ENCODE measurements at regions of chr6 and their contacts with region 1.

Region 1: DNA sequence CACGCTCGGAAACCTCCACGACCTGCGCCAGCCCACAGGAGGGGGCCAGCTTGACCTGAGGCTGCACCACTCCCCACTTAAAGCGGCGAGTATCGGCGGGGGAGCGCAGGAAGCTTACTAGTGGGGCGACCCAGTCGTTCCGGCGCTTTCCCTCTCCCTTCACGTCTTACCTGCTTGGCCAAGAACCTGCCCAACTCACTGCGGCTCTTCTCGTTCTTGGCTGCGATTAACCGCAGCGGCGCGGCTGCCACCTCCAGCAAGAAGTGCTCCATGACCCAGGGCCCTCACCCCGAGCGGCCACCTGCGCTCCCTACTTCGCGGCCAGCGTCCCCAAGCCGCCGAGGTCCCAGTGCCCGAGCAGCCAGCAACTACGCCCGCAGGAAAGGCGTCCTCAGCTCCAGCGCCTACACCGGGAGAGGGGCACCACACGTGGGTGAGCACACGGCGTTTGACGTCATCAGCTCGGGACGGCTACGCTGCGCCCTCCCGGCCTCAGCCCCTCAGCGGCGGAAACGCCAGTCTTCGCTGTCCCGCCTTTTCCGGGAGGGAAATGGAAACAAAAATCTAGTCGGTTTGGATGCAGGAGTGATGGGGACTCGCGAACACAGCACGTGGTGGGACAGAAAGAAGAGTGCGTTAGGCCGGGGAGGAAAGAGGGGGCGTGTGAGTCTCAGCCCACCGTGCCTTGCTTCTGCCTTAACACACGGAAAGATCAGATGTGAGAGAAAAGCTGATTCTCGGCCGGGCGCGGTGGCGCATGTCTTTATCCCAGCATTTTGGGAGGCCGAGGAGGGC is at the start of gene MDN1:
- DNase-seq: peak; percentile 87 to 88
- ATAC-seq: peak; percentile 97 to 99
- H3K4me3 ChIP-seq: peak within 1 kb of the TSS; percentile 72 to 99 (median 94)
- H3K27ac ChIP-seq: peak within 1 kb of the TSS; percentile 88 to 99 (median 94)
- H3K4me1 ChIP-seq: peaks cover 11 to 23% of the 10 kb centered on the region in 2 donors
- H3K27me3 ChIP-seq: no peaks in the 10 kb centered on the region
- CTCF ChIP-seq: no peak
- POLR2A ChIP-seq: peak; percentile 80
- total RNA-seq, gene MDN1: 13.5 to 22.0 (median 17.0) TPM

Region 2: DNA sequence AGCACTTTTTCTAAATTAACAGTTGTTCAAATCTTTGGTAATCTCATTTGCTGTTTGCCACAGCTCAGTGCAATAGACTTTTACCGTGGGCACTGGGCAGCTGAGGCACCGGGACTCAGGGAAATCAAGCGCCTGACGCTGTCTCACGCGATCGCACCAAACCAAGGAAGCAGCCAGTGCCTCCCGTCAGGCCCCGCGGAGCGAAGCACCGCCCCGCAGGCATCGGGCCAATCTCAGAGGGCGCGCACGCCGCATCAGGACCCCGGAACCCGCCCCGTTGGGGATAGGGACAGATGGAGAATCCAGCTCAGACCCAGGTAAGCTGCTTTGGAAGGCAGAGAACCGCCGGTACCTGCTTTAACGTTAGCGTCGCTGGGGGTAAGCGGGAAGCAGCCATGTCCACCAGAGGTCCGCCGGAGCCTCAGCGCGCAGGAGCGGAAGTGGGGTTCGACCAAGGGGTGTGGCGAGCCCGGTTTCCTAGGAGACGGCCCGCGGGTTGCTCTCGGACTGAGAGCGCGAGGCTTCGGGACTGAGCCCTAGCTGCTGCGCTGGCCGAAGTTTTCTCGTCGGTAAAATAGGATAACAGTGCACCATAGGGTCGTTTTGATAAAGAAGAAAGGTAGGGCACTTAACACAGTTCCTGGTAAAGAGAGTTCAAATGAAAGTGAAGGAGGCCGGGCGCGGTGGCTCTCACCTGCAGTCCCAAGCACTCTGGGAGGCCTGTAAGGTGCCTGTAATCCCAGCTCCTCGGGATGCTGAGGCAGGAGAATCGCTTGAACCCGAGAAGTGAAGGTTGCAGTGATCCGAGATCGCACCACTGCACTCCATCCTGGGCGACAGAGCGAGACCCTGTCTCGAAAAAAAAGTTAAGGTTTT is 181.0 kb before region 1 on chr6 and contains the start of gene LYRM2:
- in situ Hi-C with region 1: no loop called
- intact Hi-C with region 1: loop called (anchors 2 kb)
- DNase-seq: peak; percentile 93 to 94
- ATAC-seq: peak; percentile 97 to 98
- H3K4me3 ChIP-seq: peak within 1 kb of the TSS; percentile 76 to 88 (median 85)
- H3K27ac ChIP-seq: peak within 1 kb of the TSS; percentile 90 to 98 (median 95)
- H3K4me1 ChIP-seq: peaks cover 14% of the 10 kb centered on the region in 2 donors
- H3K27me3 ChIP-seq: no peaks in the 10 kb centered on the region
- CTCF ChIP-seq: peak in 4 of 5 experiments; percentile 5 to 27 (median 19)
- POLR2A ChIP-seq: peak; percentile 90 to 91
- total RNA-seq, gene LYRM2: 15.8 to 40.2 (median 23.3) TPM

Region 3: DNA sequence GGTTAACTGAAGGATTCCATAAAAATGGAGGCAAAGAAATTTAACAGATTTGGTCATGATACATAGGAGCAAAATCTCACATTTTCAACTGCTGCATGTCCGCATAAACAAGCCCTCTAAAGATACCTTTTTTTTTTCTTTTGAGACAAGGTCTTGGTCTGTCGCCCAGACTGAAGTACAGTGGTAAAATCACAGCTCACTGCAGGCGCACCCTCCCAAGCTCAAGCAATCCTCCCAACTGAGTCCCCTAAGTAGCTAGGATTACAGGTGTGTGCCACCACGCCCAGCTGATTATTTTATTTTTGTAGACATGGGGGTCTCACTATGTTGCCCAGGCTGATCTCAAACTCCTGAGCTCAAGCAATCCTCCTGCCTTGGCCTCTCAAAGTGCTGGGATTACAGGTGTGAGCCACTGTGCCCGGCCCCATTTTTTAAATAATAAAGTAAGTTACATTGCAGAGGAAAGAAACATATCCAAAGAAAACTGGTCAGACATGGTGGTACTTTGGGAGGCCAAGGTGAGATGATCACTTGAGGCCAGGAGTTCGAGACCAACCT is 13.6 kb before region 1 on chr6:
- in situ Hi-C with region 1: no loop called
- intact Hi-C with region 1: no loop called
- DNase-seq: no peak
- ATAC-seq: no peak
- H3K4me3 ChIP-seq: no peak overlapping the region
- H3K27ac ChIP-seq: no peak overlapping the region
- H3K4me1 ChIP-seq: no peaks in the 10 kb centered on the region
- H3K27me3 ChIP-seq: no peaks in the 10 kb centered on the region
- CTCF ChIP-seq: no peak
- POLR2A ChIP-seq: no peak

Region 4: DNA sequence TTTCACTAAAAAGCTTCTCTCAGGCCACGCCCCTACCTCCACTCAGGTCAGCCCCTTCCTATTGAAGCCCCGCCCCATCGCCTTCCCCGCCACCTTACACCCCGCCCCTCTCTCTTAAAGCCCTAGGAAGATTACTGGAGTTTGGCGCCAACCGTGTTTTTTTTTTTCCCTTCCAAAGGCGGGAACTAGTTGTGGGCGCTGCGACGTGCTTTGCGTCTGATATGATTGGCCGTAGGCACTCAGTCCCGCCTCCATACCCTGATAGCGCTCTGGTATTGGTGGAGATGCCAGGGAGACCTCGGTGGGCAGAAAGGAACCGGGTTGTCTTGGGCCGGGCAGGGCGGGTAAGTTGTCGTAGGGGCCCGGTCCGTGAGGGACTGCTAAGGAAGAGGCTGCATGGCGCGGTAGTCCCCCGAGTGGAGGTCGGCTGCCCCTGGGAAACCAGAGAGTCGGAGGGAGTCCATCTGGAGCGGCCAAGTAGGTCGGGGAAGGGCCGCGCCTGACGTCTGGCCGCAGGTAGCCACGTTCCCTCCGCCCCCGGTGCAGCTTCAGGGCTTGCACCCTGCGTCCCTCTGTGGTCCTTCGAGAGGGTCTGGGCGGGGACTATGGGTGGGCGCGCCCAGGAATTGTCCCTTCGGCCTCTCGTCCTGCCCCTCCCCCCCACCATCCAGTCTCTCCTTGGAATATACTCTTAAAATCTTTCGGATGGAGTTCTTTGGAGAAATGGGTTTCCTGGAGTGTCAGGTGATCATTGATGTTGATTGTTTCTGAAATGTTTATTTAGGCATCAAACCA is 10.3 kb after region 1 on chr6 and contains the start of gene CASP8AP2:
- in situ Hi-C with region 1: no loop called
- intact Hi-C with region 1: loop called (anchors 1 kb)
- DNase-seq: peak; percentile 93 to 96
- ATAC-seq: peak; percentile 99 to 100
- H3K4me3 ChIP-seq: peak within 1 kb of the TSS; percentile 64 to 98 (median 88)
- H3K27ac ChIP-seq: peak within 1 kb of the TSS; percentile 81 to 89 (median 84)
- H3K4me1 ChIP-seq: peaks cover 11 to 18% of the 10 kb centered on the region in 2 donors
- H3K27me3 ChIP-seq: no peaks in the 10 kb centered on the region
- CTCF ChIP-seq: no peak
- POLR2A ChIP-seq: peak; percentile 73 to 91
- total RNA-seq, gene CASP8AP2: 7.8 to 14.2 (median 11.6) TPM

Region 5: DNA sequence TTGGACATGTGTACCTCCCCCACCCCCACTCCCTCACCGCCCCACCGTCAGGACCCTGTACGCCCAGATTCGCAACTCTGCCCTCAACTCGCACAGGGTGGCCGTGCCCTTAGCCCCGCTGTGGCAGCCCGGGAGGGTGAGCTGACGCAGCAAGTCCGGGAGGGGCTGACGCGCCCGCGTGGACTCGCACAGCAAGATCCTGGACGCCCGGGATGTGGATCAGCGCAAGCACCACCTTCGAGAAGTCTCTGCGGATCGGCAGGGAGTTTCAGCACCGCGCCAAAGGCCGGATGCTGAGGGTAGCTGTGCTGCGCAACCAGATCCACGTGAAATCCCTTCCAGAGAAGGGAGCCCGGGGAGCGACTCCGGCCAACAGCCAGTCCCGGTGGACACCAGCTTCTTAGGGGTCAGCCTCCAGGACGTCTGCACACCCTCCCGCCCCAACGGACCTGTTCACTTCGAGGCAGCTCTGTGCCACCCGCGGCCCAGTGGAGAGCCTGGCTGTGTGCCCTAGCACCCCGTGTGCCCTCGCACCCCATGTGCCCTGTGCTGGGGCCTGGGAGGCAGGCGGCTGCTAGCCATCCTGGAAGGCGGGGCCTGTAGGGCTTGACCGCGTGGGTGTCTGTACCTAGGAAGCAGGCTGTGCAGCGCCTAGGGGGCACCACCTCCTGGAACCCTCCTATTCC is 68.1 kb after region 1 on chr6:
- in situ Hi-C with region 1: no loop called
- intact Hi-C with region 1: no loop called
- DNase-seq: no peak
- ATAC-seq: no peak
- H3K4me3 ChIP-seq: no peak overlapping the region
- H3K27ac ChIP-seq: no peak overlapping the region
- H3K4me1 ChIP-seq: no peaks in the 10 kb centered on the region
- H3K27me3 ChIP-seq: peaks cover 13 to 26% (median 13%) of the 10 kb centered on the region in 3 donors
- CTCF ChIP-seq: no peak
- POLR2A ChIP-seq: no peak

Region 6: DNA sequence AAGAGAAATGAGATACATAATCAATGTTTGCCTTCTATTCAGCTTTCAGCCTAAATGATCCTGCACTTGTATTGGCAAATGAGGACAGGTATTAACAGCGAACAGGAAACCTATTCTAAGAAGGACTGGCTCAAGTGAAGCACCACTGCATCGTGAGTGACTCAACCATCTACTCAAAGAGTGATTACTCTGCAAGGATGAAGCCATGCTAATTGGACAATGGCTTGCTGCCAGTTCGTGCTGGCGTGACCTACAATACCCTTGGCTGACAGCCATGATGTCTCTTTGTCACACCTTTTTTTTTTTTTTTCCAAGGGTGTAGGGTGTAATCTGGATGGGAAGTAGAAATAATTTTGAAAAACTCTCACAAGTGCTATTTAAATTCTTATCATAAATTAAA is 179.6 kb after region 1 on chr6:
- in situ Hi-C with region 1: no loop called
- intact Hi-C with region 1: no loop called
- DNase-seq: no peak
- ATAC-seq: peak in 1 of 2 donors; percentile 48
- H3K4me3 ChIP-seq: no peak overlapping the region
- H3K27ac ChIP-seq: no peak overlapping the region
- H3K4me1 ChIP-seq: peaks cover 27 to 31% of the 10 kb centered on the region in 2 donors
- H3K27me3 ChIP-seq: no peaks in the 10 kb centered on the region
- CTCF ChIP-seq: no peak
- POLR2A ChIP-seq: no peak